K562 (cell line): ENCODE measurements at regions of chr18 and their contacts with region 1.

Region 1: DNA sequence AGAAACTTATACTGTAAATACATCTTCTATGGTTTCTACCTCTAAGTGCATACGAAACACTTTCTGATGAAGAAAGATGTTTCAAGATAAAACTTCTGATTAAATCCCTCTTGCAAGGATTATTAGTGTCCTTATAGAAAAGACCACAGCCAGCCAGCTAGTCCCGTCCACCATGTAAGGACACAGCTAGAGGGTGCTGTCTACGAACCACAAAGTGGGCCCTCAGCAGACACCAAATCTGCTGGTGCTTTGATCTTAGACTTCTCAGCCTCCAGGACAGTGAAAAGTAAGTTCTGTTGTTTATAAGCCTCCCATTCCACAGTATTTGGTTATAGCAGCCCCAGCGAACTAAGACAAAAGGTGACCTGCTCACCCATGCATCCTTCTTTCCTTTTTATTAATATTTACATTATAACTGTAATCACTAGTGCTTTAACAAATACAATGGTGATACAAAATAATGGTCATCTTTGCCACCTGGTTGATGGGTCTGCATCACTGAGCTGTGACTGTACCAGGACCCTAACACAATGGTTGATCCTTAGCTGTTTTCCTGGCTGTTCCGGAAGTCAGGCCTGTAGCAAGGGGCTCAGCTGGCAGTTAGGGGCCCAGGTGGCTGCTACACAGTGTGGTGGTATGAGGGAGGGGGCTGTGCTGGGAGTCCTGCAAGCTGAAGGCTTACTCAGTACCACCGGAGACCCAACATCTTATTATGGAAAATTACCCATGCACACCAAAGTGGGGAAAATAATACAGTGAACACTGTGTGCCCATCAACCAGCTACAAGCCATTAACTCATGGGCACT is 108.5 kb upstream of the SMAD7 start:
- DNase-seq: peak in 1 of 4 experiments; percentile 50
- ATAC-seq: peak; percentile 68
- H3K4me3 ChIP-seq: no peak overlapping the region
- H3K27ac ChIP-seq: no peak overlapping the region
- H3K4me1 ChIP-seq: peaks cover 12 to 32% of the 10 kb centered on the region in 2 experiments
- H3K27me3 ChIP-seq: no peaks in the 10 kb centered on the region
- CTCF ChIP-seq: peak; percentile 53 to 63 (median 53)
- EP300 ChIP-seq: no peak
- POLR2A ChIP-seq: no peak
- RAD21 ChIP-seq: peak; percentile 17 to 63; a peak in 2 of 4 replicates

Region 2: GRCh38 chr18:47331026-47331425 is 1728.2 kb before region 1 on chr18:
- CTCF ChIA-PET with region 1: no interaction called
- POLR2A ChIA-PET with region 1: no interaction called
- in situ Hi-C with region 1: no loop called
- intact Hi-C with region 1: no loop called
- DNase-seq: no peak
- ATAC-seq: no peak
- H3K4me3 ChIP-seq: no peak overlapping the region
- H3K27ac ChIP-seq: no peak overlapping the region
- H3K4me1 ChIP-seq: no peaks in the 10 kb centered on the region
- H3K27me3 ChIP-seq: no peaks in the 10 kb centered on the region
- CTCF ChIP-seq: no peak
- EP300 ChIP-seq: no peak
- POLR2A ChIP-seq: no peak
- RAD21 ChIP-seq: no peak

Region 3: GRCh38 chr18:49114556-49114955 is 55.3 kb after region 1 on chr18:
- CTCF ChIA-PET with region 1: no interaction called
- POLR2A ChIA-PET with region 1: no interaction called
- in situ Hi-C with region 1: no loop called
- intact Hi-C with region 1: no loop called
- DNase-seq: no peak
- ATAC-seq: no peak
- H3K4me3 ChIP-seq: no peak overlapping the region
- H3K27ac ChIP-seq: no peak overlapping the region
- H3K4me1 ChIP-seq: peaks cover 0 to 5% of the 10 kb centered on the region in 2 experiments; a peak in 2 of 5 replicates
- H3K27me3 ChIP-seq: no peaks in the 10 kb centered on the region
- CTCF ChIP-seq: no peak
- EP300 ChIP-seq: no peak
- POLR2A ChIP-seq: no peak
- RAD21 ChIP-seq: no peak

Region 4: DNA sequence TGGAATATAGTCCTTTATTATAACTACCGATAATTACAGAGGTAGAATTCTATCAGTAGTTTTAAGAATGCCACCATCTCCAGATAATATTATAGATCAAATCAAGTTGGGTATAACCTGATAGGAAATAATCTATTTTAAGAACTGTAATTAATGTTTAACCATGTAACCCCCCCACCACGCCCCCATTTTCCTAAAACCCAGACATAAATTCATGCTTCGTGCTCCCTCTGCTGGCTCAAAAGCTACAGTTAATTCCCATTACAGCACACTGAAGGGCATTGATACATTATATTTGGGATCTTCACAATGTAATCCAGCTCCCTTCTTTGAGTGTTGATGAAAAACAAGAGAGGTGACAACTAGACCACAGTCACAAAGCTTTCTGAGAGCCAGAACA is 119.5 kb after region 1 on chr18:
- CTCF ChIA-PET with region 1: interaction called, 3 read pairs
- POLR2A ChIA-PET with region 1: no interaction called
- in situ Hi-C with region 1: no loop called
- intact Hi-C with region 1: loop called (anchors 1 kb)
- DNase-seq: peak; percentile 19 to 52 (median 26)
- ATAC-seq: peak; percentile 55; the same call in 1 of the 3 replicates
- H3K4me3 ChIP-seq: no peak overlapping the region
- H3K27ac ChIP-seq: no peak overlapping the region
- H3K4me1 ChIP-seq: no peaks in the 10 kb centered on the region
- H3K27me3 ChIP-seq: no peaks in the 10 kb centered on the region
- CTCF ChIP-seq: peak; percentile 52 to 61 (median 58); a peak in 5 of 6 replicates
- EP300 ChIP-seq: no peak
- POLR2A ChIP-seq: no peak
- RAD21 ChIP-seq: peak; percentile 60 to 76